Heart right ventricle (tissue), 16 donors: ENCODE measurements at regions of chr15 and their contacts with region 1.

Region 1: DNA sequence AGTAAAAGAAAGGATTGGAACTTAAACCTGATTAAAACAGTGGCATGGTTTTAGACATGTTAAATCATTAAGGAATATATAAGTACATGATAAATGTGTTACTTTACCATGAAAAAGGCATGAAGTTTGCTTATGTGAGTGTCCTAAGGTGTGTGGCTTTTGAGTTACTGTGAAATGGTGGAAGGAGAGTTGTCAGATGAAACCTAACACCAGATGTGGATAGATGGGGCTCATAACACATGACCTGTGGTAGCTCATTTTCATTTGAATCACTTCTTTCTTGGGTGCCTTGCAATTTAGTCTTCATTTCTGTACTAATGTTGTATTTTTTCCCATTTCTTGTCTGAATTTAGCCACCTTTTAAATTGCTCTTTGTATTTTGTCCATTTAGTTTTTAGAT is 13.0 kb downstream of the MEF2A start:
- DNase-seq: no peak
- ATAC-seq: no peak
- H3K4me3 ChIP-seq: no peak overlapping the region
- H3K27ac ChIP-seq: peak overlapping the region in 1 of 10 donors; percentile 14
- H3K4me1 ChIP-seq: peaks cover 8 to 99% (median 63%) of the 10 kb centered on the region in 9 donors
- H3K27me3 ChIP-seq: no peaks in the 10 kb centered on the region
- CTCF ChIP-seq: no peak

Region 2: GRCh38 chr15:99651023-99651807 is 72.4 kb after region 1 on chr15:
- intact Hi-C with region 1: loop called in 1 of 10 experiments (anchors 10 kb)
- DNase-seq: no peak
- ATAC-seq: peak in 3 of 8 donors; percentile 44 to 58 (median 44)
- H3K4me3 ChIP-seq: no peak overlapping the region
- H3K27ac ChIP-seq: no peak overlapping the region
- H3K4me1 ChIP-seq: peaks cover 0 to 20% (median 3%) of the 10 kb centered on the region in 9 donors
- H3K27me3 ChIP-seq: no peaks in the 10 kb centered on the region
- CTCF ChIP-seq: no peak